Spleen (tissue), 13 donors: ENCODE measurements at regions of chr15 and their contacts with region 1.

Region 1: DNA sequence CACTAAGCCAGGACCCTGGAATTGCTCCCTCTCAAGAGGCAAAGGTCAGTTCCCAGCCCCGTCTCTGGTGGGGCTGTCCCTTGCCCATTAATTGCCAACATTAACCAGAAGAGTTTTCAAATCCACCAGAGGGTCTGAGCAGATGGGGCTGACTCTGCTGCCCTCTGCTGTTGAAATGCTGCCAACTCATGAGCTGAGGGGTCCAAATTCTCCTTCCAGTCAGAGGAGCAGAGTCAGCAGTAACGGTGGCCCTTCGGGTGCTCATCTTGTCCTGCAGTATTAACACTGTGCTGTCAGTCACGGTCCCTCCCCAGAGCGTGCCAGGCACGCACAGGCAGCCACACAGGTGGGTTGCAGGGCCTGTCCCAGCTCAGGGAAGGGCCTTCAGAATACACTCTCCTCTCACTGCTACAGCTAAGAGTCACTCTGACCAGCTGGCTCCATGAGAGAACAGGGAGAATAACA is 10.7 kb upstream of the SPTBN5 start:
- DNase-seq: peak; percentile 84
- H3K4me3 ChIP-seq: no peak overlapping the region
- H3K27ac ChIP-seq: peak overlapping the region in 1 of 8 donors; percentile 24
- H3K4me1 ChIP-seq: peaks cover 0 to 15% (median 8%) of the 10 kb centered on the region in 6 donors
- H3K27me3 ChIP-seq: no peaks in the 10 kb centered on the region
- CTCF ChIP-seq: peak; percentile 77 to 94 (median 88)
- POLR2A ChIP-seq: no peak

Region 2: DNA sequence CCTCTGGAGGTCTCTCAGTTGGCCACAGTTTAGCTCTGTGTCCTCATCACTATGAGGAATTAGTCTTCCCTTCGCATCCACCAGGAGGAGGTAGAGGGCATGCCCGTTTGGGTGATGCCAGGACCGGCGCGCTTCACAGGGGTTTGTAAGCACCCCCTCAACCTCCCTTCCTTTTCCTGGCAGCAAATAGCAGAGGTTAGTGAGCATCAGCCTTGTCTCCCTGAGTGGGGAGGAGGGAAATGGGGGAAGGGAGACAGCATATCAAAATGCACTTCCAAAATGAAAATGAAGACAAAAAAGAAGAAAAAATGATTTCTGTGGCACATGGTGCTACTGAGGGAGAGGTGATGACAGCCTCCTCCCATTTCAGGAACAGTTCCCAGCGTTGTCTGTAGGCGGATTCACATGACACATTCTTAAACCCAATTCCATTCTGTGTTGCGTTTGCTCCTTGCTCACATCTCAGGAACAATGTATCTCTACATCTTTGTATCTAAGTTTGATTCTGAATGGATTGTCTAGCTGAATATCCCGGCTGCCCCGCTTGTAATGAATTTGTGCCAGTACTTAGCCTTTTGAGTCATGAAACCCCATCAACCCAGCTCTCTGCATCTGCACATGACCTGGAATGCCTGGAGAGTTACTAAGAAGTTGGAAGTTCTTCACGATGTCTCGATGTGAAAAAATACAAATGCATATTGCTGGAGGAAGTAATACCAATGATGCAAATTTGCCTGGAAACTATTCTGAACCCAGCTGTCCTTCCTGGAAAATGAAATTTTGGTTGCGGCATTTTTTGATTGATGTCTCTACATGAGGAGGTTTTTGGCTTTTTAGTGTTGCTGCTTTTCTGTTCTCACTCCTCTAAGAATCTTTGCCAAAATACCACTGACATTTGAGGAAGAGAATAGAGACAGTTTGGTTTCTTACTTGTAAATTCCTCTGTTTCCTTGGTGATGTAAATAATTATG is 300.3 kb before region 1 on chr15:
- intact Hi-C with region 1: loop called (anchors 10 kb)
- DNase-seq: peak; percentile 82
- H3K4me3 ChIP-seq: peak overlapping the region in 3 of 8 donors; percentile 11 to 55 (median 18)
- H3K27ac ChIP-seq: peak overlapping the region in 1 of 8 donors; percentile 7
- H3K4me1 ChIP-seq: peaks cover 0 to 17% (median 13%) of the 10 kb centered on the region in 6 donors
- H3K27me3 ChIP-seq: no peaks in the 10 kb centered on the region
- CTCF ChIP-seq: peak; percentile 50 to 77 (median 70)
- POLR2A ChIP-seq: no peak

Region 3: GRCh38 chr15:41746802-41747201 is 157.8 kb before region 1 on chr15:
- intact Hi-C with region 1: no loop called
- DNase-seq: no peak
- H3K4me3 ChIP-seq: no peak overlapping the region
- H3K27ac ChIP-seq: no peak overlapping the region
- H3K4me1 ChIP-seq: no peaks in the 10 kb centered on the region
- H3K27me3 ChIP-seq: no peaks in the 10 kb centered on the region
- CTCF ChIP-seq: no peak
- POLR2A ChIP-seq: no peak

Region 4: GRCh38 chr15:41774062-41774881 is 130.3 kb before region 1 on chr15 and contains the start of gene MAPKBP1:
- intact Hi-C with region 1: loop called (anchors 5 kb)
- DNase-seq: peak; percentile 100
- H3K4me3 ChIP-seq: peak within 1 kb of the TSS; percentile 66 to 86 (median 80)
- H3K27ac ChIP-seq: peak within 1 kb of the TSS; percentile 72 to 93 (median 90)
- H3K4me1 ChIP-seq: peaks cover 30 to 61% (median 55%) of the 10 kb centered on the region in 6 donors
- H3K27me3 ChIP-seq: no peaks in the 10 kb centered on the region
- CTCF ChIP-seq: peak in 10 of 11 experiments; percentile 51 to 85 (median 77)
- POLR2A ChIP-seq: peak in 2 of 3 donors; percentile 31 to 54
- total RNA-seq, gene MAPKBP1: 19.9 to 44.5 (median 37.4) TPM

Region 5: DNA sequence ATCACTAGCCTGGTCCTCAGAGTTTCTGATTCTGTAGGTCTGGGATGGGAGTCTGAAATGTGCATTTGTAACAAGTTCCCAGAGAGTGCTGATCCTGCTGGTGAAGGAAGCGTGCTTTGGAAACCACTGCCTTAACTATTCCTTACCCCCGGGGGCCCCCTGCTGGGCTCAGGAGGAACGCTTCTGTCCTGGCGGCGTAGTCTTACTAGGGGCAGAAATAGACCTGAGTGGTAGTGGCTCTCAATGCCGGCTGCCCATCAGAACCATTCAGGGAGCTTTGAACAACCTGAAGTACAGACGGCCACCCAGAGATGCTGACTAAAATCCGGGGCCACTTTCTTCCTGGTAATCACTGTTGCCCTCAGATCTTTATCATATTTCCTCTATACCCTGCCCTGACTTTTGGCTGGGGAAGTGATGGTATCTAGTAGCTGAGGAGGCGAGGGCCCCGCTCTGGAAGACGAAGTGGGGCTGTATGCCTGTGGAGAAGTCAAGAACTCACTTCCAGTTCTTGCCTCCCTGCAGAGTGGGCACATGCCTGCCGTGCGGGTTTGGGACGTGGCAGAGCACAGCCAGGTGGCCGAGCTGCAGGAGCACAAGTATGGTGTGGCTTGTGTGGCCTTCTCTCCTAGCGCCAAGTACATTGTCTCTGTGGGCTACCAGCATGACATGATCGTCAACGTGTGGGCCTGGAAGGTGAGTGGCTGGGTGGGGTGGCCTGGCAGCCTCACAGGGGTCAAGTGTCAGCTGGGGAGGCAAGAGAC is 93.0 kb before region 1 on chr15:
- intact Hi-C with region 1: loop called (anchors 10 kb)
- DNase-seq: peak; percentile 93
- H3K4me3 ChIP-seq: no peak overlapping the region
- H3K27ac ChIP-seq: no peak overlapping the region
- H3K4me1 ChIP-seq: peaks cover 0 to 27% (median 9%) of the 10 kb centered on the region in 6 donors
- H3K27me3 ChIP-seq: no peaks in the 10 kb centered on the region
- CTCF ChIP-seq: peak; percentile 78 to 95 (median 90)
- POLR2A ChIP-seq: no peak

Region 6: GRCh38 chr15:41827880-41828806 is 76.4 kb before region 1 on chr15 and contains the start of gene JMJD7:
- intact Hi-C with region 1: no loop called
- DNase-seq: peak; percentile 99
- H3K4me3 ChIP-seq: peak within 1 kb of the TSS; percentile 70 to 90 (median 86)
- H3K27ac ChIP-seq: peak within 1 kb of the TSS; percentile 69 to 91 (median 80)
- H3K4me1 ChIP-seq: peaks cover 13 to 59% (median 44%) of the 10 kb centered on the region in 6 donors
- H3K27me3 ChIP-seq: no peaks in the 10 kb centered on the region
- CTCF ChIP-seq: peak in 1 of 11 experiments; percentile 34
- POLR2A ChIP-seq: peak in 1 of 3 donors; percentile 39
- total RNA-seq, gene JMJD7: 3.2 to 20.1 (median 13.0) TPM